ENCODE measurements at regions of chr14 and their contacts with region 1.

Region 1: DNA sequence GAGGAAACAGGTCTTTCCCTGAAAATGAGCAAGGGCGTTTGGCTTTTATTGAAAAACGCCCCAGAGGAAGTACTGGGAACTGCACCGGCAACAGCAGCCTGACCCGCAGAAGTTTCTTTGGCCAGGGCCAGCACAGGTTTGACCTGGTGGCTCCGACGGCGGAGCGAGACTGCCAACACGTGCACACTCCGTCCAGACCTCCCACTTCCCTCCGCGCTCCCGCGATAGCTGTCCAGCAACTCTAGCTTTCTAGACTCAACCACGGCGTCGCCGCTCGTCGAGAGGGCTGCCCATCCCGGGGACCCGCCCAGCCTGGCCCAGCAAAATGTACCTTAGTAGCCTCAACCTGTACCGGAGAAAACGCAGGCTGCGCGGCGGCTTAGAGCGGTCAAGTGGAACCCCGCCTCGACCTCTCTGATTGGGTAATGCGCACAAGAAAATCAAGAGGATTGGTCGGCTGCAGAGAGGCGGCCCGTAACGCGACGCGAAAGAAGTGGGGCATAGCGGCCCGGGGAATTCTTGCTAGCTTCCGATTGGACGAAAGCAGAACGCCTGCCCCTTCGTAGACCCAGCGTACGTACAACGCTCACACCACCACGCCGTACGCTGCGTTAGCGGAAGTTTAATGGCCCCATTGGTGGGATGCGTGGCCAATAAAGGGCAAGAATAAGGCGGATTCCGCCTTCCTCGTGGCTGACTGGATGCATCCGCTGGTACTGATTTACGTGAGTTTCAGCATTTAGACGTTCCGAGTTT is at the start of gene WDR89:
- DNase-seq: peak; percentile 97
- ATAC-seq: peak; percentile 97
- total RNA-seq, gene WDR89: 5.0 TPM

Region 2: GRCh38 chr14:63543000-63543825 is 98.4 kb before region 1 on chr14 and contains the start of gene PPP2R5E:
- intact Hi-C with region 1: loop called (anchors 5 kb)
- DNase-seq: peak; percentile 98
- ATAC-seq: peak; percentile 99
- total RNA-seq, gene PPP2R5E: 32.9 TPM

Region 3: GRCh38 chr14:63891148-63891975 is 249.7 kb after region 1 on chr14:
- intact Hi-C with region 1: no loop called
- DNase-seq: no peak
- ATAC-seq: peak; percentile 62

Measured in Right ventricle myocardium superior (tissue), 1 donor.